HCT116 (cell line): ENCODE measurements at regions of chr18 and their contacts with region 1.

Region 1: DNA sequence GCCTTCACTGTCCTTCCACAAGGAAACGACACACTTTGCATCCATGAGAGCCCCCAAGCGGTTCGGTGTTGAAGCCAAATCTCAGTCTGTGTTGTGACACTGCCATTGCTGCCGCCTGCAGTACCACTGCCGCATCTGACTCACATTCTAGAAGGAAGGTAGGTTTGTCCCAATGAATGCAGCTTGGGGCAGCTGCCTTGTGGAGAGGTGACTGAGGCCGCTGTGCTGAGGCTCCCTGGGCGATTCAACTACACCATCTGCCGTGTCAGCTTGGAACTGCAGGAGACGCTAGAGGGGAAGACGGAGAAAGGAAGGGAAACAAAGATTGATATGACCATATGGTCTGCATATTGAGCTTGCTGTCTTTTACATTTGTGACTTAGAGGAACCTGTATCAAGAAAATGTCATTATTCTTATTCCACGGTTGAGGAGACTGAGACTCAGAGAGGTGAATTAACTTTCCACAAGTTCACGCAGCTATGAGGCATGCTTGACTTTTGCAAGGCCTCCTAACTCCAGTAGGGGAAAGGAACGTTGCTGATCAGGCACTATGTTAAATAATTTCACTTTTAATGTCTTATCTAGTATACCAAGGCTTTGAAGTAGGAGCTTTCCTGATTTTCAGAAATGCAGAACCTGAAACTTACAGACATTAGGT is 43.5 kb upstream of the LMAN1 start:
- DNase-seq: peak; percentile 94
- ATAC-seq: peak; percentile 100
- H3K4me3 ChIP-seq: no peak overlapping the region
- H3K27ac ChIP-seq: no peak overlapping the region
- H3K4me1 ChIP-seq: no peaks in the 10 kb centered on the region
- H3K27me3 ChIP-seq: no peaks in the 10 kb centered on the region
- CTCF ChIP-seq: peak; percentile 90 to 99 (median 99)
- POLR2A ChIP-seq: no peak
- RAD21 ChIP-seq: peak; percentile 100

Region 2: DNA sequence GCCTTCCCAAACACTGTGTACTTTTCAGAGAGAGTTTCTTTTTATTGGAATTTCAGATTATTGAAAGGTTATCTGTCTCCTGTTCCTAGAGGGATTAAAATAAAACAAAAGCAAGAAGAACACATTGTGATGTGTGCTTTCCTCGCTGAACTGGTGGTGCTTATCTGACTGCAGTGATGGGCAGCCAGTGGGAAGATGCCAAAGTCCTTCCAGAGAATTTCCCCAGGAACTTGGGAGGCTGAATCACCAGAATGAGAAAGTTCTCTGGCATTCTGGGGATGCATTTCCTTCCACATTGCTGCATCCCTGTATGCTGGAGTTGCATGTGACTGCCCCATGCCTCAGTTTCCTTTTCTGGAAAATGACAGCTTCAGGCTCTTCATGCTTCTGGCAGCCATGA is 316.8 kb before region 1 on chr18:
- CTCF ChIA-PET with region 1: interaction called, 31 read pairs
- POLR2A ChIA-PET with region 1: no interaction called
- RAD21 ChIA-PET with region 1: no interaction called
- intact Hi-C with region 1: loop called (anchors 2 kb)
- DNase-seq: no peak
- ATAC-seq: no peak
- H3K4me3 ChIP-seq: no peak overlapping the region
- H3K27ac ChIP-seq: no peak overlapping the region
- H3K4me1 ChIP-seq: no peaks in the 10 kb centered on the region
- H3K27me3 ChIP-seq: peaks cover 4% of the 10 kb centered on the region
- CTCF ChIP-seq: no peak
- POLR2A ChIP-seq: no peak
- RAD21 ChIP-seq: no peak

Region 3: DNA sequence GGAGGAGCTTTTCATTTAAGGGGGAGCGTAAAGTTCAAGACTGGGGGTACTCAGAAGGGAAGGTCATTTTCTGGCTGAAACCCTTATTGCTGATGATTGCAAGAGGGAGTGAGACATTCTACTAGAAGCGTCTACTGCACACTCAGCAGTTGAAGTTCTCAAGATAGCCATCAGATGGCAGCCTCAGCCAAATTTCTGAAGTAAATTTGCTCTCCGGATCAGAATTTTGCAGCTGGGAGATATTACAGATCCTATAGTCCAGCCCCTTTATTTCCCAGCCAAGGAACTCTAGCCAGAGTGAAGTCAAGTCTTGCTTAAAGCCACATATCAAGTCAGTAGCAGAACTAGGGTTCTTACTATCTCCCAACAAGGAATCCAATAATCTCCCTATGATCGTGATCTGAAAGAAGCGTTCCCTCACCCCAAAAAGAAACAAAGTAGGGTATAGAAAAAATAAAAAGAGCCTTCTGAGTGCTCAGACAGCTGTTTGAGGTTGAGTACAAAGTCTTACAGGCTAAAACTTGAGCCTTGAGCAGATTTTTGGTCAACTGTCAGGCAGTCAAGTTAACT is 153.3 kb before region 1 on chr18:
- CTCF ChIA-PET with region 1: interaction called, 154 read pairs
- POLR2A ChIA-PET with region 1: interaction called, 6 read pairs
- RAD21 ChIA-PET with region 1: interaction called, 15 to 22 read pairs
- intact Hi-C with region 1: loop called (anchors 2 kb)
- DNase-seq: peak; percentile 75
- ATAC-seq: peak; percentile 94
- H3K4me3 ChIP-seq: no peak overlapping the region
- H3K27ac ChIP-seq: no peak overlapping the region
- H3K4me1 ChIP-seq: no peaks in the 10 kb centered on the region
- H3K27me3 ChIP-seq: peaks cover 45% of the 10 kb centered on the region
- CTCF ChIP-seq: peak; percentile 72 to 81 (median 73)
- POLR2A ChIP-seq: no peak
- RAD21 ChIP-seq: peak; percentile 74

Region 4: DNA sequence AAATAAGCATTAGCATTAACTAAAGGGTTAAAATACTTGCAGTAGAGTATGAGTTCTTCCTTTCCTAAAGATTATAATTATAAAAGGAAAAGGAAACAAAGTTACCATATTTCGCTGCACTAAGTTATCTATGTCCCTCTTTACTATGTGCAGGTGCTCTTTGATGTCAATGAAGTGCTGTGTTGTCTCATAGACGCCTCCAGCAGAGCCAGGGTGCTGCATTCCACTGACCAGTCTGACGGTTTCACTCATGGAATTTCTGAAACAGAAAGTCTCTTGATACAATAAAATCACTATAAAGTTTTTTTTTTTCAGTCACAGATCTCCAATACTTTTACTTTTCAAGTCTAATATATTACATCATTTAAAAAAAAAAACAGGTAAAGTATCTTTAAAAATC is 69.6 kb before region 1 on chr18:
- CTCF ChIA-PET with region 1: no interaction called
- POLR2A ChIA-PET with region 1: no interaction called
- RAD21 ChIA-PET with region 1: no interaction called
- intact Hi-C with region 1: no loop called
- DNase-seq: no peak
- ATAC-seq: no peak
- H3K4me3 ChIP-seq: no peak overlapping the region
- H3K27ac ChIP-seq: no peak overlapping the region
- H3K4me1 ChIP-seq: no peaks in the 10 kb centered on the region
- H3K27me3 ChIP-seq: no peaks in the 10 kb centered on the region
- CTCF ChIP-seq: no peak
- POLR2A ChIP-seq: no peak
- RAD21 ChIP-seq: no peak

Region 5: GRCh38 chr18:59358712-59359575 is 43.6 kb before region 1 on chr18 and contains the start of gene LMAN1:
- CTCF ChIA-PET with region 1: interaction called, 8 read pairs
- POLR2A ChIA-PET with region 1: interaction called, 3 read pairs
- RAD21 ChIA-PET with region 1: no interaction called
- intact Hi-C with region 1: loop called (anchors 5 kb)
- DNase-seq: peak; percentile 79
- ATAC-seq: peak; percentile 97
- H3K4me3 ChIP-seq: peak within 1 kb of the TSS; percentile 92 to 94
- H3K27ac ChIP-seq: peak within 1 kb of the TSS; percentile 89
- H3K4me1 ChIP-seq: peaks cover 4 to 19% of the 10 kb centered on the region in 2 experiments; a peak in 2 of 4 replicates
- H3K27me3 ChIP-seq: no peaks in the 10 kb centered on the region
- CTCF ChIP-seq: no peak
- POLR2A ChIP-seq: peak; percentile 70
- RAD21 ChIP-seq: no peak
- total RNA-seq, gene LMAN1: 73.7 TPM

Region 6: DNA sequence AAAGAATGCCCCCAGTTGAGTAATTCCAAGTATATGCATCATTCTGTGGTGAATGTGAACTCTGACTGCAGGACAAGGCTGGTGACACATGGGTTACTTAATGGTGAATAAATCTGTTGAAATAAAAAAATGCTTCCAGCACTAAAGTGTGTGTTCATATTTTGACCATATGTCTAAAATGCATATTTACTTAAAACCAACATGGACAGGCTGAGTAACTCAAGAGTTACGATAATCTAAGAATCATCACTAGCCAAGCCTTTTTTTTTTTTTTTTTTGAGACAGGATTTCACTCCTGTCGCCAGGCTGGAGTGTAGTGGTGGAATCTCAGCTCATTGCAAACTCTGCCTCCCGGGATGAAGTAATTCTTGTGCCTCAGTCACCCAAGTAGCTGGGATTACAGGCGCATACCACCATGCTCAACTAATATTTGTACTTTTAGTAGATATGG is 341.7 kb after region 1 on chr18:
- CTCF ChIA-PET with region 1: no interaction called
- POLR2A ChIA-PET with region 1: no interaction called
- RAD21 ChIA-PET with region 1: no interaction called
- intact Hi-C with region 1: no loop called
- DNase-seq: no peak
- ATAC-seq: no peak
- H3K4me3 ChIP-seq: no peak overlapping the region
- H3K27ac ChIP-seq: no peak overlapping the region
- H3K4me1 ChIP-seq: peaks cover 0 to 14% of the 10 kb centered on the region in 2 experiments; a peak in 2 of 4 replicates
- H3K27me3 ChIP-seq: no peaks in the 10 kb centered on the region
- CTCF ChIP-seq: no peak
- POLR2A ChIP-seq: no peak
- RAD21 ChIP-seq: no peak